ENCODE measurements at regions of chr6 and their contacts with region 1.

Region 1: DNA sequence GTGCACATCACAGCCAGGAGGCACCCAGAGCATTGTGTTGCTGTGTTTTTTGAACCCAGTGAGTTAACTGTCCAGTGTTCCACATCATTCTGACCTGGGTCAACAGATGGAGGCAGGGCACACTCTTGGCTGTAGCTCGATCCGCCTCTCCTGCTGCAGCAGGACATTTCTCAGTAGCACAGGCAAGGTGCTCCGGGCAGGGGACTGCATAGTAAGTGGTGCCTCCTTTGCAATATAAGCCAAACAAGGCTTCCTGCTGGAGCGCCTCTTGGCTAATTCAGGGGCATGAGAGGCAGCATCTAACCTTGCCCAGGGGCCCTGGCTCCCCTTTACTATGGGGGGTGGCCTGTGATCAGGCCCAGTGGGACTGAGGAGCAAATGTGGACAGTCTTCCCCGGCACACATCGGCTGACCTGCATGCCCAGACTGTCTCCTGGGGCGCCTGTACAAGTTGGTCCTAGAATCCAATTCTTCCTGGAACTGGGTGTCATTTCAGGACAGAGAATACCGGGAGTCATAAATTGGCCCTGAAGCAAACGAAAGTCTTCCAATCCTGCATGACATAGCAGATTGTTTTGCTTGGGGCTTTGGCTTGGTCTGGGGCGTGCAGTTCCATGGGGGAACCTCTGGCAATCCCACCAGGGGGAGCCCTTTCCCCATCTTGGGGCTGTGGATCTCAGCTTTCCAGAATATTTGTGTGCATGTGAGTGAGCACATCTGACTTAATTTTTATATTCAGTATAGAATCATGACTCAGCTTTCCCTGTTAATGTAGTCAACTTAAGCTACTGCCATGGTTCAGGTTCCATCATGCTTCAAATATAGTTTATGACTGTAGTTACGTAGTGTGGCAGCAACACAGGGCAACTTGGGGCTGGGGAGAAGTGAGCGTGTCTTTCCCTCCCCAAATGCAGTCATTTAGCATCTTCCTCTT is 56.0 kb upstream of the DDR1 start:
- DNase-seq: peak; percentile 91 to 98
- H3K4me3 ChIP-seq: no peak overlapping the region
- CTCF ChIP-seq: peak in 2 of 3 donors; percentile 48 to 90
- POLR2A ChIP-seq: no peak

Region 2: DNA sequence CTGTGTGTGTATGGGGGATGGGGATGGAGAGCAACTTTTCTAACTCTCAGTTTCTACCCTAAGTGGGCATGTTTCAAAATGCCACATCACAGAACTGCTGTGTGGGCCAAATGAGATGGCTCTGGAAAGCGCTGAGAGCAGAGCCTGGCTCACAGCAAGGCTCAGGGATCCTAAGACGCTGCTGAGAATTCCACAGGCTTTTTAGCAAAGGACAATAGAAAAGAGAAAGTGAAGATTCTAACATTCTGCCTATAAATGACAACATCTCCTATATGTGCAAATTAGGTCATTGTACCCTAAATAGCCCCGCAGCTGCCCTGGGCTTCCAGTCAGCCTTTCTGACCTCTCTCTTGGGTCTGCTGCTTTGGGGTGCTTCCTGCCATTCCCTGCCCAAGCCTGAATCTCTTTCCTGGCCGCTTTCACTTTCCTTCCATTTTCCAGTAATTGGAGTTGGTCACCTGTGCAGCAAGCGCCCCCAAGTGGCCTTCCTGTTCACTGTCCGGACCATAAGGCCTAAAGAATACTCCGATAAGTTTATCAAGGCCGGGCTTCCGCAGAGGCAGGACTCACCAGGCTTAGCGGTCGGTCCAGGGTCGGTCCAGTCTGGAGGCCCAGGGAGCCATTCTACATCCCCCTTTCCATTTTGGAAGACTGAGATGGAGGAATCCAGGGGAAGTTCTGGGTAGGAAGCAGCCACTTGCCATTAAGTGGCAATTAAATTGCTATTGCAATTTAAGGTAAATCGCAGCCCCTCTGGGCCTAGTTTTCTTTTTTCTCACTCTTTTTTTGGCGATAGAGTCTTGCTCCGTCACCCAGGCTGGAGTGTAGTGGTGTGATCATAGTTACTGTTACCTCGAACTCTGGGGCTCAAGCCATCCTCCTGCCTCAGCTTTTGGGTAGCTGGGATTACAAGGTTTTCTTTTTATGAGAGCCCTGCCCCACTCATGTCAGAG is 49.4 kb after region 1 on chr6:
- intact Hi-C with region 1: loop called (anchors 5 kb)
- DNase-seq: peak; percentile 89 to 97
- H3K4me3 ChIP-seq: no peak overlapping the region
- CTCF ChIP-seq: peak in 1 of 3 donors; percentile 85
- POLR2A ChIP-seq: no peak

Region 3: GRCh38 chr6:30990422-30991086 is 162.3 kb after region 1 on chr6:
- intact Hi-C with region 1: no loop called
- DNase-seq: no peak
- H3K4me3 ChIP-seq: no peak overlapping the region
- CTCF ChIP-seq: no peak
- POLR2A ChIP-seq: no peak